ENCODE measurements at regions of chr2 and their contacts with region 1.

Region 1: GRCh38 chr2:43939695-43940256 is 56.0 kb downstream of the LRPPRC start:
- DNase-seq: no peak
- ATAC-seq: no peak
- H3K4me3 ChIP-seq: no peak overlapping the region
- H3K27ac ChIP-seq: no peak overlapping the region
- H3K4me1 ChIP-seq: no peaks in the 10 kb centered on the region
- H3K27me3 ChIP-seq: no peaks in the 10 kb centered on the region
- CTCF ChIP-seq: no peak
- EP300 ChIP-seq: no peak
- POLR2A ChIP-seq: no peak
- RAD21 ChIP-seq: no peak

Region 2: GRCh38 chr2:43877782-43878464 is 61.9 kb before region 1 on chr2:
- CTCF ChIA-PET with region 1: no interaction called
- POLR2A ChIA-PET with region 1: interaction called, 4 read pairs
- in situ Hi-C with region 1: no loop called
- intact Hi-C with region 1: loop called (anchors 5 kb)
- DNase-seq: peak; percentile 59
- ATAC-seq: peak; percentile 64
- H3K4me3 ChIP-seq: no peak overlapping the region
- H3K27ac ChIP-seq: no peak overlapping the region
- H3K4me1 ChIP-seq: peaks cover 25% of the 10 kb centered on the region
- H3K27me3 ChIP-seq: no peaks in the 10 kb centered on the region
- CTCF ChIP-seq: peak; percentile 98
- EP300 ChIP-seq: no peak
- POLR2A ChIP-seq: no peak
- RAD21 ChIP-seq: peak; percentile 93

Region 3: GRCh38 chr2:43985359-43985758 is 45.6 kb after region 1 on chr2:
- CTCF ChIA-PET with region 1: no interaction called
- POLR2A ChIA-PET with region 1: no interaction called
- in situ Hi-C with region 1: no loop called
- intact Hi-C with region 1: no loop called
- DNase-seq: no peak
- ATAC-seq: no peak; the same call in 2 of the 3 replicates
- H3K4me3 ChIP-seq: no peak overlapping the region
- H3K27ac ChIP-seq: no peak overlapping the region
- H3K4me1 ChIP-seq: peaks cover 13% of the 10 kb centered on the region; the same call in 1 of the 2 replicates
- H3K27me3 ChIP-seq: no peaks in the 10 kb centered on the region
- CTCF ChIP-seq: no peak
- EP300 ChIP-seq: no peak
- POLR2A ChIP-seq: 0 out of 4 replicates have a peak, but pooled peaks of 1 of the 2 experiments have one; percentile 39
- RAD21 ChIP-seq: no peak